ENCODE measurements at regions of chr1 and their contacts with region 1.

Region 1: DNA sequence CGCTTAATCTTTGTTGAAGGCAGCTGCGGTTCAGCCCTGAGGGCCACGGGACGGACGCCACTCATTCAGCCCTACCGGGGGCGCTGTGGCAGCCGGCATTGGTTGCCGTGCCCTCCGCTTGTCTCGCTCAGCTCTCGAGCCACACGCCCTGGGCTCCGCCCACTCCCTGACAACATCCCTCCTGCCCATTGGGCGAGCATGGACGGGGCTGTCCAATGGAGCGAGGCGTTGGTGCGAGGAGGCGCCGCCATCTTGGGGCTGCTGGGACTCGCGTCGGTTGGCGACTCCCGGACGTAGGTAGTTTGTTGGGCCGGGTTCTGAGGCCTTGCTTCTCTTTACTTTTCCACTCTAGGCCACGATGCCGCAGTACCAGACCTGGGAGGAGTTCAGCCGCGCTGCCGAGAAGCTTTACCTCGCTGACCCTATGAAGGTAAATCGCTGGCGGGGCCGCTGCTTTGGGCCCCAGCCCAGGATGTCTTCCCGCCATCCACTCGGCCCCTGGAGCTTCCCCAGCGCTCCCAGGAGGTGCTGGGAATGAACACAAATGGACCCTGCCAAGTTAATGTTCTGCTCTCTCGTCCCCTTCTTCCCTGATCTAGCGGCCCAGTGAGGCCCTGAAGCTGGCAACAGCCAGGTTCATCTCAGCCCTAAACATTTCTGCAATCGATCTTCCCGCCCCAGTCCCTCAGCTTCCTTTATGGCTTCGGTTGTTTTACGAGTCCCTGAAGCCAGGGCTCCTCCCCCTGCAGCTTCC is at the start of gene SRP9:
- DNase-seq: peak; percentile 100
- H3K4me3 Mint-ChIP-seq: no peak within 1 kb of the TSS
- H3K27ac Mint-ChIP-seq: no peak within 1 kb of the TSS
- H3K4me1 Mint-ChIP-seq: peaks cover 21% of the 10 kb centered on the region
- H3K27me3 Mint-ChIP-seq: no peaks in the 10 kb centered on the region
- CTCF ChIP-seq: peak; percentile 96
- total RNA-seq, gene SRP9: 417 and 511 TPM in 2 replicates

Region 2: GRCh38 chr1:225460737-225461562 is 316.8 kb before region 1 on chr1:
- CTCF ChIA-PET with region 1: interaction called, 8 read pairs
- POLR2A ChIA-PET with region 1: interaction called, 10 read pairs
- intact Hi-C with region 1: no loop called
- DNase-seq: peak; percentile 84
- H3K4me3 Mint-ChIP-seq: no peak overlapping the region
- H3K27ac Mint-ChIP-seq: no peak overlapping the region
- H3K4me1 Mint-ChIP-seq: peaks cover 70% of the 10 kb centered on the region
- H3K27me3 Mint-ChIP-seq: no peaks in the 10 kb centered on the region
- CTCF ChIP-seq: no peak

Region 3: DNA sequence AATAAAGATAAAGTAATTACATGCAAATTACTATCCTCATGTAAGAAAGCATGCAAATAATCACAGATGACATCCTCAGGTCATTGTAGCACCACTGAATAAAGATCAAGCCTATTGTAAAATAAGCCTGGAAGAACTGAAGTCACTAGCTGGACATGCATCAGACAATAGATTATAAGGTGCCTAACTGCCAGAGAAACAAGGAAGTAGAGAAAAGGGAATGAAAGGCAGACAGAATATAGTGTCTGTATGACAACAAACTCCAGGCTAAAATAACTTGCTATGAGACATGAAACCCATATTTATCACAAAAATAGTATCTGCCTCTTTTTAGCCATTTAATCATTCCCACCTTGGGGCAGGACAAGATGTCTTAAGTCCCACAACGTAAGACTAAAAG is 233.5 kb before region 1 on chr1:
- CTCF ChIA-PET with region 1: interaction called, 245 read pairs
- POLR2A ChIA-PET with region 1: interaction called, 24 read pairs
- intact Hi-C with region 1: no loop called
- DNase-seq: no peak
- H3K4me3 Mint-ChIP-seq: no peak overlapping the region
- H3K27ac Mint-ChIP-seq: no peak overlapping the region
- H3K4me1 Mint-ChIP-seq: peaks cover 12% of the 10 kb centered on the region
- H3K27me3 Mint-ChIP-seq: no peaks in the 10 kb centered on the region
- CTCF ChIP-seq: no peak

Region 4: DNA sequence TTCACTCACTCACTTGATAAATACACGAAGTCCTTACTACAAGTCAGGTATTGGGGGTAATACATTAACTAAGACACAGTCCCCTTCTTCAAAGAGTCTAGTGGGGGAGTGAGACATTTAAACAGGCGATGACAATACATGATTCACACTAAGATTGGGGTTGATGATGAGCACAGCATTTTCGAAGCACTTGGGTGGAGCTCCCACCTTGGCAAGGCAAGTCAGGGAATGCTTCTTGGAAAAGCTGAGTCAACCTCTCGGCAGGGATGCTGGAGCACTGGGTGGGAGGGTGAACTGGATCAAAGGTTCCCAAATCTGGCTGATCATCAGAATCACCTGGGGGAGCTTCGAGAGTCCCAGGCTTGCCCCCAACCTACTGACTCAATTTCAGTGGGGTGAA is 67.0 kb before region 1 on chr1:
- CTCF ChIA-PET with region 1: interaction called, 50 read pairs
- POLR2A ChIA-PET with region 1: interaction called, 29 read pairs
- intact Hi-C with region 1: no loop called
- DNase-seq: peak; percentile 97
- H3K4me3 Mint-ChIP-seq: no peak overlapping the region
- H3K27ac Mint-ChIP-seq: peak overlapping the region; percentile 56
- H3K4me1 Mint-ChIP-seq: peaks cover 17% of the 10 kb centered on the region
- H3K27me3 Mint-ChIP-seq: no peaks in the 10 kb centered on the region
- CTCF ChIP-seq: no peak

Region 5: DNA sequence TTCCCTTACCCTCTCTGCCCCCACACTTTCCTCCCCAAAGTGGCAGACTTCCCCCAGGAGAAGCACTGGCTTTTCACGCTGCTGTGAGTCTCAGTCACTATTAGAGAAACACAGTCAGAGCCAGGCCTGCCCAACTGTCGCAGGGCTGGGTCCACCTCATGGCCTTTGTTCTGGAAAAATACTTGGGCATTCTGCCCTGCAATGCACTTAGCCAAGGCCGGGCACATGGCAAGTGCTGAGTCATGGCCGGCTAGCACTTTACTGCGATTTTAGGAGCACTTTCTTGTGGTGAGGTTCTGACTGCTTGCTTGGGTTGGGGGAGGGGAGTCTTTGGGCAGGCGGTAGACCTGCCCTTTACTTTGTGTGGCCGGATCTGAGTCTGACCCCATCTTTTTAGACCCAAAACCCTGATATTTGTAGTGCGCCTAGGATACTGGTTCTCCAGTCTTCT is 39.9 kb after region 1 on chr1:
- CTCF ChIA-PET with region 1: interaction called, 75 read pairs
- POLR2A ChIA-PET with region 1: interaction called, 135 read pairs
- intact Hi-C with region 1: no loop called
- DNase-seq: peak; percentile 100
- H3K4me3 Mint-ChIP-seq: peak overlapping the region; percentile 6
- H3K27ac Mint-ChIP-seq: peak overlapping the region; percentile 98
- H3K4me1 Mint-ChIP-seq: peaks cover 48% of the 10 kb centered on the region
- H3K27me3 Mint-ChIP-seq: no peaks in the 10 kb centered on the region
- CTCF ChIP-seq: no peak

Region 6: DNA sequence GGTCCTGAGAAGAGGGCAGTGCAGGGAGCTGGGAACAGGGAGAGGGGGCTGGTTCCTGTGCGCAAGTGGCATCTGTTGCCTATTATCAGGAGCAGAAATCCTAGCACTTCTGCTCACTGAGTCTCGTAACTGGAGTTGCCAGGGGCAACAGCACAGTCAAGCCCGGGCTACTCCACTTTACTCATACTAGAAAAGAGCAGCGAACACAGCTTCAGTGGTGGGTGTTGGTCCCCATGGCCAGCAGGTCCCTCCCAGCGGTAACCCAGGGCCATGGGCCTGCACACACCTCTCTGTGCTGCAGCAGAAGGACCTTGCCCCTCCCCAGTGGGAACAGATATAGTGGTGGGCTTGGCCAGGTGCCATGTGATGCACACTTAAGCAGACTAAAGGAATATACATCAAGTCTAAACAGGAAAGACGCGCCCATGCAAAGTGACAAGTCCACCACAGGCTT is 137.8 kb after region 1 on chr1:
- CTCF ChIA-PET with region 1: interaction called, 4 read pairs
- POLR2A ChIA-PET with region 1: interaction called, 12 read pairs
- intact Hi-C with region 1: no loop called
- DNase-seq: no peak
- H3K4me3 Mint-ChIP-seq: no peak overlapping the region
- H3K27ac Mint-ChIP-seq: no peak overlapping the region
- H3K4me1 Mint-ChIP-seq: peaks cover 24% of the 10 kb centered on the region
- H3K27me3 Mint-ChIP-seq: no peaks in the 10 kb centered on the region
- CTCF ChIP-seq: no peak

Region 7: GRCh38 chr1:226062558-226063223 is 284.9 kb after region 1 on chr1 and contains the start of gene H3-3A:
- CTCF ChIA-PET with region 1: interaction called, 7 read pairs
- POLR2A ChIA-PET with region 1: interaction called, 27 read pairs
- intact Hi-C with region 1: no loop called
- DNase-seq: peak; percentile 100
- H3K4me3 Mint-ChIP-seq: peak within 1 kb of the TSS; percentile 100
- H3K27ac Mint-ChIP-seq: peak within 1 kb of the TSS; percentile 99
- H3K4me1 Mint-ChIP-seq: peaks cover 35% of the 10 kb centered on the region
- H3K27me3 Mint-ChIP-seq: no peaks in the 10 kb centered on the region
- CTCF ChIP-seq: no peak
- total RNA-seq, gene H3-3A: 635 and 710 TPM in 2 replicates